B cell (primary cell): ENCODE measurements at regions of chr16 and their contacts with region 1.

Region 1: GRCh38 chr16:2720719-2721633 is 952 bp upstream of the PRSS27 start:
- DNase-seq: peak; percentile 91
- ATAC-seq: peak; percentile 92
- H3K4me3 ChIP-seq: peak overlapping the region in 4 of 5 experiments; percentile 49 to 70 (median 65)
- H3K4me3 Mint-ChIP-seq: peak overlapping the region; percentile 83
- H3K27ac ChIP-seq: peak overlapping the region; percentile 12 to 67
- H3K27ac Mint-ChIP-seq: peak overlapping the region; percentile 82
- H3K4me1 ChIP-seq: peaks cover 3 to 13% of the 10 kb centered on the region in 2 donors
- H3K4me1 Mint-ChIP-seq: peaks cover 4% of the 10 kb centered on the region
- H3K27me3 ChIP-seq: peaks cover 0 to 9% (median 4%) of the 10 kb centered on the region in 4 experiments
- H3K27me3 Mint-ChIP-seq: peaks cover 12% of the 10 kb centered on the region
- CTCF ChIP-seq: peak; percentile 88

Region 2: DNA sequence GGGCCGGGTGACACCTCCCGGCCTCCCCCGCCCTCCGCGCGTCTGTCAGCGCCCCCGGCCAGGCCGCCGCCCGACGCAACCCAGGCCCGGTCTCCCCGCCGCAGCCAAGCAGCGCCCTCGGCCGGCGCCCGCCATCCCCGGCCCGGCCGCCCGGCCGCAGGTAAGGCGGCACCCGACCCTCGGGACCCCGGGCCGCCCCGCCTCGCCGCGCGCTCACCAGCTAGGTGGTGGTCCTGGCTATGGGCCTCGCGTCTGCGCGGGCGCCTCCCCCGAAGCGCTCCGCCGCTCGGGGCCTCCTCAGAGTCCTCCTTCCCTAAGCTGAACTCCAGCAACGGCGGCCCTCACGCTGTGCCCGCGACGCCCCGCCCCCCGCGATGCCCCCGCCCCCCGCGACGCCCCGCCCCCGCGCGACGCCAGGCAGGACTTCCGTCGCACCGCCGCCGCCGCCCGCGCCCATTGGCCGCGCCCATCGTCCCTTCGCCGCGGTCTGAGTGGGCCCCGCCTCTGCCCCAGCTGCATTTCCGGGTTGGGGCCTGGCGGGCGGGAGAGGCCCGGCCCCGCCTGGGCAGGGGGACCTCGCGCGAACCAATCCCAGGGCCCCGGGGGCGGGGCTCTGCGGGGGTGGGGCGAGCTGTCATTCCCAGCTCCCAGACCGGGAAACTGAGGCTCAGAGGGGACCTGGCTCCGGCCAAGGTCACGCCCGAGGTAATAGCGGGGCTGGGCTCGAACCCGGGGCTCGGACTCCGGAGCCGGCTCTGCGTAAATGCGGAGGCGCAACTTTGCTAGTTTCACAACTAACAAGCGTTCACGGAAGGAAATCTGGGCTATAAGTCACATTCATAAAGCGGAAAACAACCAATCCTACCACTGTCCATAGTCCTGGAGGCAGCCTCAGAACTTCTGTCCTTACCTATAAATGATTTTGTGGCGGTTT is 47.6 kb before region 1 on chr16:
- CTCF ChIA-PET with region 1: no interaction called
- POLR2A ChIA-PET with region 1: no interaction called
- intact Hi-C with region 1: loop called (anchors 1 kb)
- DNase-seq: peak; percentile 96
- ATAC-seq: peak; percentile 93
- H3K4me3 ChIP-seq: peak overlapping the region; percentile 70 to 87 (median 79)
- H3K4me3 Mint-ChIP-seq: peak overlapping the region; percentile 89
- H3K27ac ChIP-seq: peak overlapping the region; percentile 59 to 73
- H3K27ac Mint-ChIP-seq: peak overlapping the region; percentile 90
- H3K4me1 ChIP-seq: peaks cover 10 to 27% of the 10 kb centered on the region in 2 donors
- H3K4me1 Mint-ChIP-seq: peaks cover 26% of the 10 kb centered on the region
- H3K27me3 ChIP-seq: no peaks in the 10 kb centered on the region
- H3K27me3 Mint-ChIP-seq: no peaks in the 10 kb centered on the region
- CTCF ChIP-seq: no peak

Region 3: DNA sequence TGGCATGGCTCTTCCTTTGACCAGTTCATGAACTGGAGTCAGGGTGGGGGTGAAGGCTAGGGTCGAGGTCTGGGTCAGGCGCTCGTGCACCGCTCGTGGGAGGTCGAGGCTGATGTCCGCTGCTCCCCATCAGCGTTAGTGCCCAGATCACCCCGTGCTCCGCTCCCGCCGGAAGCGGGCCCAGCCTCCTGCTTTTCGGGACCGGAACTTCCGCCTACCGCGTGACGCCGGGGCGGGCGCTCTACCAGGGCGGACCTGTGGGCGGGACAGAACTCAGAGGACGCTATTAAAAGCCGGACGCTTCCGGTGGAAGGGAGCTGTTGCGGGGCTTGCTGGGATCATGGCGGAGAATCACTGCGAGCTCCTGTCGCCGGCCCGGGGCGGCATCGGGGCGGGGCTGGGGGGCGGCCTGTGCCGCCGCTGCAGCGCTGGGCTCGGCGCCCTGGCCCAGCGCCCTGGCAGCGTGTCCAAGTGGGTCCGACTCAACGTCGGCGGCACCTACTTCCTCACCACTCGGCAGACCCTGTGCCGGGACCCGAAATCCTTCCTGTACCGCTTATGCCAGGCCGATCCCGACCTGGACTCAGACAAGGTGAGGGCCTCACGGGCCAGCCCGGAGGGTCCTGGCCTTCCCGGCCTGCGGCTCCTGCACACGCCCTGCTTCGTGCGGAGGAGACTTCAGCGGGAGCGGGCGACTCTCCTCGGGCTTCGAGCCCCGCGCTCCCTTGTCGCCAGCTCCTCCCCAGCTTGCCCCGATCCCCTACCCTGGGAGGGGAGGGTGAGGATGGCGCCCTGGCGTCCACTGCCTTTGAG is 38.6 kb before region 1 on chr16 and contains the start of gene KCTD5:
- CTCF ChIA-PET with region 1: no interaction called
- POLR2A ChIA-PET with region 1: interaction called, 3 read pairs
- intact Hi-C with region 1: loop called (anchors 1 kb)
- DNase-seq: peak; percentile 97
- ATAC-seq: peak; percentile 86
- H3K4me3 ChIP-seq: peak within 1 kb of the TSS; percentile 81 to 99 (median 96)
- H3K4me3 Mint-ChIP-seq: peak within 1 kb of the TSS; percentile 99
- H3K27ac ChIP-seq: peak within 1 kb of the TSS; percentile 71 to 79
- H3K27ac Mint-ChIP-seq: peak within 1 kb of the TSS; percentile 97
- H3K4me1 ChIP-seq: peaks cover 15 to 27% of the 10 kb centered on the region in 2 donors
- H3K4me1 Mint-ChIP-seq: peaks cover 21% of the 10 kb centered on the region
- H3K27me3 ChIP-seq: no peaks in the 10 kb centered on the region
- H3K27me3 Mint-ChIP-seq: no peaks in the 10 kb centered on the region
- CTCF ChIP-seq: no peak
- total RNA-seq, gene KCTD5: 35.1 and 37.3 TPM in 2 replicates

Region 4: GRCh38 chr16:2752035-2752849 is 31.3 kb after region 1 on chr16 and contains the start of gene SRRM2:
- CTCF ChIA-PET with region 1: no interaction called
- POLR2A ChIA-PET with region 1: no interaction called
- intact Hi-C with region 1: loop called (anchors 1 kb)
- DNase-seq: peak; percentile 100
- ATAC-seq: peak; percentile 83
- H3K4me3 ChIP-seq: peak within 1 kb of the TSS; percentile 68 to 97 (median 82)
- H3K4me3 Mint-ChIP-seq: peak within 1 kb of the TSS; percentile 95
- H3K27ac ChIP-seq: peak within 1 kb of the TSS; percentile 95 to 98
- H3K27ac Mint-ChIP-seq: peak within 1 kb of the TSS; percentile 99
- H3K4me1 ChIP-seq: peaks cover 36 to 45% of the 10 kb centered on the region in 2 donors
- H3K4me1 Mint-ChIP-seq: peaks cover 50% of the 10 kb centered on the region
- H3K27me3 ChIP-seq: no peaks in the 10 kb centered on the region
- H3K27me3 Mint-ChIP-seq: no peaks in the 10 kb centered on the region
- CTCF ChIP-seq: no peak
- total RNA-seq, gene SRRM2: 1,470 and 1,485 TPM in 2 replicates